ENCODE measurements at regions of chr3 and their contacts with region 1.

Region 1: GRCh38 chr3:152071924-152072323 is 196.8 kb upstream of the MBNL1 start:
- DNase-seq: peak; percentile 73

Region 2: DNA sequence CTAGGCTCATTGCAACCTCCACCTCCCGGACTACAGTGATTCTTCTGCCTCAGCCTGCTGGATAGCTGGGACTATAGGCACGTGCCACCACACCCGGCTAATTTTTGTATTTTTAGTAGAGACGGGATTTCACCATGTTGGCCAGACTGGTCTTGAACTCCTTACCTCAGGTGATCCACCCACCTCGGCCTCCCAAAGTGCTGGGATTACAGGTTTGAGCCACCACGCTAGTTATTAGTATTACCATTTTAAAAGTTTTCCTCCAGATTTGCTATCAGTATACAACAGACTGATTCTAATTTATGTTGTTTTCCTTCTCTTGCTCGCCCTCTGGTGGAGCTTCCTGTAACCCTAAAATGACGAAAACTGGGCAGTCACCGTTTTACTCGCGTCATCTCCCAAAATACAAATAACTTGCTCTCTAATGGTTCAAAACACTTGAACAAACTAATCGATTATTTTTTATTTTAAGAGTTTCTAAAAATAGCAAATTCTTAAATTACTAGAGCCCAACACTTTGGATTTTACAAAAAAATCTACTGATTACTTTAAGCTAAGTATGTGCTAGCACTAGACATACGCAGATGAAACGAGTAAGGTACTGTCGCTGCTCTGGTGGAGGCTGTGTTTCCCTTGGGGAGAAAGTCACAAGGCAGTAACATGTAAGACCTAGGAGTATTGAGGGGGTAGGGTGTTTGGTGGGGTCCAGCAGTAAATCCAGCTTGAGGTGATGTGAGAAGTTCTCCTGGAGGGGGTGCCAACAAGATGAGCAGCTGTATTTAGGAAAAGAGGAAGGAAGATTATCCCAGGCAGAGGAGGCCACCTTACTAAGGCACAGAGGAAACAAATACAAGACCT is 400.1 kb after region 1 on chr3:
- in situ Hi-C with region 1: loop called (anchors 25 kb)
- DNase-seq: peak; percentile 91